Activated CD4-positive, alpha-beta T cell treated with anti-CD3 and anti-CD28 coated beads for 36 hours (primary cell): ENCODE measurements at regions of chr12 and their contacts with region 1.

Region 1: GRCh38 chr12:11648831-11649702 is at the start of gene ETV6:
- DNase-seq: peak; percentile 89
- ATAC-seq: peak; percentile 52
- H3K4me3 Mint-ChIP-seq: peak within 1 kb of the TSS; percentile 93
- H3K27ac Mint-ChIP-seq: peak within 1 kb of the TSS; percentile 100
- H3K4me1 Mint-ChIP-seq: peaks cover 27% of the 10 kb centered on the region
- H3K27me3 Mint-ChIP-seq: no peaks in the 10 kb centered on the region
- total RNA-seq, gene ETV6: 53.5 to 56.7 TPM

Region 2: GRCh38 chr12:9673404-9674225 is 1975.5 kb before region 1 on chr12:
- CTCF ChIA-PET with region 1: no interaction called
- POLR2A ChIA-PET with region 1: no interaction called
- intact Hi-C with region 1: loop called in 1 of 2 experiments (anchors 10 kb)
- DNase-seq: peak; percentile 89
- ATAC-seq: peak; percentile 47
- H3K4me3 Mint-ChIP-seq: peak overlapping the region; percentile 93
- H3K27ac Mint-ChIP-seq: peak overlapping the region; percentile 99
- H3K4me1 Mint-ChIP-seq: peaks cover 47% of the 10 kb centered on the region
- H3K27me3 Mint-ChIP-seq: no peaks in the 10 kb centered on the region

Region 3: DNA sequence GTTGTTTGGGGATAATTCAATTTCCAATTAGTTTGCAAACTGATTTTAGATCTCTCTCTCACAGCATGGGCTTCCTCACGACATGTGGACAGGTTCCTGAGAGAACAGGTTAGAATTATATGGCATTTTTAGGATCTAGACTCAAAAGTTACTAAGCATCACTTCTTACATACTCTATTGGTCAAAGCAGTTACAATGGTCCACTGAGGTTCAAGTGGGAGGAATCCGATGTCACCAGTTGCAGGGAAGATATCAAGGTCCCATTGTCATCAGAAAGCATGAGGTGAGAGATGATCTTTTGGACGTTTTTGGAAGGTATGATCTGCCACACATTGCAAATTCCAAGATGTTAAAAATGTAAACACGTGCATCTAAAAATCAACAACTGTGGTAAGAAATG is 397.0 kb before region 1 on chr12:
- CTCF ChIA-PET with region 1: no interaction called
- POLR2A ChIA-PET with region 1: no interaction called
- intact Hi-C with region 1: no loop called
- DNase-seq: no peak
- ATAC-seq: no peak
- H3K4me3 Mint-ChIP-seq: no peak overlapping the region
- H3K27ac Mint-ChIP-seq: no peak overlapping the region
- H3K4me1 Mint-ChIP-seq: no peaks in the 10 kb centered on the region
- H3K27me3 Mint-ChIP-seq: no peaks in the 10 kb centered on the region

Region 4: DNA sequence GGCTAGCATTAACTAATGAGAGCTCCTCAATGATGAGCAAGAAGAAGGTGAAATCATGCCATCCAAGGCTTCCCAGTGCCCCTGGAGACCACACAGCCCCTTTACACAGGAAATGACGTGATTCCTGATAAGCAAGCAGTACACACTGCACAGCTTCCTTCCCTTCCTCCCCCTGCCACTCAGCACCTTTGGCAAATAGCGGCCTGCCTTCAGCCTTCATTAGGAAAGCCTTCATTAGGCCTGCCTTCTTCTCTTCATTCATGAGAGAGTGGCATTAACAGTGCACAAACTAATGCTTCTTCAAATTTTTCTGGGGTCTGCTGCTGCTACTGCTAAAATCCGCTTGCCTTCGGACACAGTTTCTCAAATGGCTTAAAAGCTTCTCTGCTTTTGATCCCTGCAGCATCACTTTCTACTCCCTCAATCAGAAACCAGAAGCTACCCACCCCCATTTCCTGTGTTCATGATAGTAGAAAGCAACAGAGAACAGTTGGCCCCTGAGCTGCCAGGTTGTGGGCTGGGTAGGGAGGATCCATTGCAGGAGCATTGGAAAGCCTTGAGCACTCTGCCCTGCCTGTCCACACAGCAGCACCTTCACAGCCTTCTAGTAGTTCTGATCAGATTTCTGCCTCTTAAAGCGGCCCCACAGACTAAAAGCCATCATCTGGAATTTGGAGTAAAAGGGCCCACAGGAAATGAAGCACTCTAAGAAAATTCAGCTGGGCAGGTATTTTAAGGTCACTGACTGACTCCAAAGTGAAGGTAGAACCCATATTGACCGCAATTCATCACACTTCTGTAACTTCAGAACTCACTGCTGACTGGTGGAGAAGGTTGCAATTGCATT is 103.4 kb before region 1 on chr12:
- CTCF ChIA-PET with region 1: no interaction called
- POLR2A ChIA-PET with region 1: interaction called, 3 read pairs
- intact Hi-C with region 1: loop called (anchors 1 to 5 kb)
- DNase-seq: peak; percentile 67
- ATAC-seq: peak; percentile 82
- H3K4me3 Mint-ChIP-seq: peak overlapping the region; percentile 53
- H3K27ac Mint-ChIP-seq: peak overlapping the region; percentile 92
- H3K4me1 Mint-ChIP-seq: peaks cover 59% of the 10 kb centered on the region
- H3K27me3 Mint-ChIP-seq: no peaks in the 10 kb centered on the region

Region 5: GRCh38 chr12:11684393-11684792 is 35.3 kb after region 1 on chr12:
- CTCF ChIA-PET with region 1: no interaction called
- POLR2A ChIA-PET with region 1: no interaction called
- intact Hi-C with region 1: no loop called
- DNase-seq: no peak
- ATAC-seq: no peak
- H3K4me3 Mint-ChIP-seq: no peak overlapping the region
- H3K27ac Mint-ChIP-seq: no peak overlapping the region
- H3K4me1 Mint-ChIP-seq: peaks cover 47% of the 10 kb centered on the region
- H3K27me3 Mint-ChIP-seq: no peaks in the 10 kb centered on the region

Region 6: GRCh38 chr12:11724888-11725311 is 75.8 kb after region 1 on chr12:
- CTCF ChIA-PET with region 1: interaction called, 3 read pairs
- POLR2A ChIA-PET with region 1: interaction called, 7 read pairs
- intact Hi-C with region 1: loop called in 1 of 2 experiments (anchors 1 kb)
- DNase-seq: no peak
- ATAC-seq: no peak
- H3K4me3 Mint-ChIP-seq: no peak overlapping the region
- H3K27ac Mint-ChIP-seq: no peak overlapping the region
- H3K4me1 Mint-ChIP-seq: peaks cover 60% of the 10 kb centered on the region
- H3K27me3 Mint-ChIP-seq: no peaks in the 10 kb centered on the region

Region 7: DNA sequence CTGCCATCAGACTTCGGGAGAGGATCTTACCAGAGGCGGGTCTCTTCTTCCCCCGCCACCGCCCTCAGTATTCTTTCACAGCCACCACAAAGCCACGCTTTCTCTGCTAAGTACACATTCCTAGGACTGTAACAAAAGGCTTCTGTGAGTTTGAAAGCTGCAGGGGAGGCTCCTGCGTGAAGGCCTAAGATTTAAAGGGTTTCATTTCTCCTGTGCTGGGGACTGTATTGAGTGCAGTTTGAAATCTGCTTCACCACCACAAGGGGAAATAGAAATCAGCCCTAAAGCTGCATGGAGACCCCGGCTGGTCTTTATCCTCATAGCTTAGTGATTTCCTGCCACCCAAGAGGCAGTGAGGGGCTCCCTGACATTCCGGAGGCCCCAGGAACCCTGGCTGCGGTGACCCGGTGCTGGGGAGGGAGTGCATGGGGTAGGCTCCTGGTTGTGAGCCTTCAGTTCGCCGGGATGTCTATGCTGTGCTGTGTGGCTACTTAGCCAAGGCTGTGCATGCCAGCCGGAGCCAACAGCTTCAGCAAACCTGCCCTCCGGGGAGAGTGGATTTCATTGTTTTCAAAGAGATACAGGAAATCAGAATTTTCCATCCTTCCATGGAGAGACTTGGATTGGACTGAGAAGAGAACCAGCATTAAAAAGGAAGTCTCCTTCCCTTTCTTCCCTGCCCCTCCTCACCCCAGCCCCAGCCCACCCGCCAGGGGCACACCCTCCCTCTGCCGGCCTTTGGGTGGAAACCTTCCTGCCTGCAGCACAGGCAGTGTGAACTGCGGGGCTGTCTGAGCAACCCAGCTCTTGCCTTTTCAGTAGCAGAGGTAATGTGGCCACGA is 163.7 kb after region 1 on chr12:
- CTCF ChIA-PET with region 1: no interaction called
- POLR2A ChIA-PET with region 1: no interaction called
- intact Hi-C with region 1: loop called in 1 of 2 experiments (anchors 5 kb)
- DNase-seq: peak; percentile 42
- ATAC-seq: peak; percentile 49
- H3K4me3 Mint-ChIP-seq: peak overlapping the region; percentile 46
- H3K27ac Mint-ChIP-seq: peak overlapping the region; percentile 72
- H3K4me1 Mint-ChIP-seq: peaks cover 60% of the 10 kb centered on the region
- H3K27me3 Mint-ChIP-seq: no peaks in the 10 kb centered on the region

Region 8: GRCh38 chr12:11981121-11981733 is 332.2 kb after region 1 on chr12:
- CTCF ChIA-PET with region 1: interaction called, 4 read pairs
- POLR2A ChIA-PET with region 1: interaction called, 4 read pairs
- intact Hi-C with region 1: loop called (anchors 1 kb)
- DNase-seq: peak; percentile 70
- ATAC-seq: peak; percentile 87
- H3K4me3 Mint-ChIP-seq: peak overlapping the region; percentile 26
- H3K27ac Mint-ChIP-seq: peak overlapping the region; percentile 99
- H3K4me1 Mint-ChIP-seq: peaks cover 58% of the 10 kb centered on the region
- H3K27me3 Mint-ChIP-seq: no peaks in the 10 kb centered on the region

Region 9: GRCh38 chr12:12724661-12725545 is 1075.8 kb after region 1 on chr12:
- CTCF ChIA-PET with region 1: no interaction called
- POLR2A ChIA-PET with region 1: no interaction called
- intact Hi-C with region 1: loop called in 1 of 2 experiments (anchors 5 kb)
- DNase-seq: peak; percentile 94
- ATAC-seq: peak; percentile 59
- H3K4me3 Mint-ChIP-seq: peak overlapping the region; percentile 93
- H3K27ac Mint-ChIP-seq: peak overlapping the region; percentile 98
- H3K4me1 Mint-ChIP-seq: peaks cover 45% of the 10 kb centered on the region
- H3K27me3 Mint-ChIP-seq: no peaks in the 10 kb centered on the region